MCF 10A (cell line): ENCODE measurements at regions of chr3 and their contacts with region 1.

Region 1: DNA sequence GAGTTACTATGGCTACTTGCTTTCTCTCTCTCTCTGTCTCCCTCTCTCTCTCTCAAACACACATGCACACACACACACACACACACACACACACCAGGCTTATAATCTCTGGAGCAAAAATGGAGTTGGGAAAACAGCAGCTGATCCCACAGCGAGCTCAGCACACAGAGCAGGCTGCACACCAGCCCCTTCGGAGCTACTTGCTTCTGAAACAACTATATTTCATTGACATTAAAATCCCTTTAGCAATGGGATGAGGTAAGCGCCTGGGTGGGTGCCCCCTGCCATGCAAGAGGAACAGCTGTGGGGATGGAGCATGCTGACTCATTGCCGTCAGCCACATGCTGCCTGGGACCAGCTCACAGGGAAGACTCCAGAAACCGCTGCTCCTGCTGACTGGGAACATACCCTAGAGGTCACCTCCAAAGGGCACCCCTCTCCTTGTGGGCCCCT is 45.7 kb downstream of the B3GNT5 start:
- DNase-seq: peak; percentile 87
- H3K4me3 Mint-ChIP-seq: no peak overlapping the region
- H3K27ac Mint-ChIP-seq: no peak overlapping the region
- H3K4me1 Mint-ChIP-seq: peaks cover 43% of the 10 kb centered on the region
- H3K27me3 Mint-ChIP-seq: no peaks in the 10 kb centered on the region
- CTCF ChIP-seq: no peak

Region 2: GRCh38 chr3:182165235-182165784 is 1133.4 kb before region 1 on chr3:
- CTCF ChIA-PET with region 1: no interaction called
- POLR2A ChIA-PET with region 1: no interaction called
- intact Hi-C with region 1: no loop called
- DNase-seq: peak; percentile 51
- H3K4me3 Mint-ChIP-seq: peak overlapping the region; percentile 10
- H3K27ac Mint-ChIP-seq: peak overlapping the region; percentile 44
- H3K4me1 Mint-ChIP-seq: peaks cover 6% of the 10 kb centered on the region
- H3K27me3 Mint-ChIP-seq: no peaks in the 10 kb centered on the region
- CTCF ChIP-seq: no peak

Region 3: DNA sequence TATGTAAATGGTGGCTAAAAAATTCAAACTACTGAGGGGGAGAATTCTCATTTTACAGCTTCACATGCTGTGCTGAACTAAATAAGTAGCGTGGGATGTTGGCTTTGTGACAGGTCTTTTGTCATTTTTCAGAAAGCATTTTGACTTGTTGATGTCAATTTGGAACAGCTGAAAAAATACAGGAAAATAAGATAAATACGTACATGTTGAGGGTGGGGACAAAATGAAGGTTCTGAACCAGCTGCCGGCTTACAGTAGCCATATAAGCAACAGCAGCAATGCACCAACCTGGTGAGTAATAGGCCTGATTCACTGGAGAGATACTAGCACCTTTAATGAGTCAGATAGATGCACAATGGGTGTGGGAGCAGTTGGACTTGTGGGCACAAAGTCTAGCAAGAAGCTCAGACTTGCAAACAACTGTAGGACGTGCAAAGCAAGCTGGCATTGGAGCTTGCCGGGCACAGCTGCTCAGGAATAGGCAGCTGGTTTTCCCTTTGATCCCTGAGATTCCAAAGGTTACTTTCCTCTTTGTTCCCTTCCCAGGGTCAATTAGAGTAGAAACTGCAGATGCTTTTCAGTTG is 32.8 kb before region 1 on chr3:
- CTCF ChIA-PET with region 1: interaction called, 6 read pairs
- POLR2A ChIA-PET with region 1: interaction called, 44 read pairs
- intact Hi-C with region 1: loop called (anchors 1 kb)
- DNase-seq: peak; percentile 96
- H3K4me3 Mint-ChIP-seq: no peak overlapping the region
- H3K27ac Mint-ChIP-seq: no peak overlapping the region
- H3K4me1 Mint-ChIP-seq: peaks cover 24% of the 10 kb centered on the region
- H3K27me3 Mint-ChIP-seq: no peaks in the 10 kb centered on the region
- CTCF ChIP-seq: no peak

Region 4: DNA sequence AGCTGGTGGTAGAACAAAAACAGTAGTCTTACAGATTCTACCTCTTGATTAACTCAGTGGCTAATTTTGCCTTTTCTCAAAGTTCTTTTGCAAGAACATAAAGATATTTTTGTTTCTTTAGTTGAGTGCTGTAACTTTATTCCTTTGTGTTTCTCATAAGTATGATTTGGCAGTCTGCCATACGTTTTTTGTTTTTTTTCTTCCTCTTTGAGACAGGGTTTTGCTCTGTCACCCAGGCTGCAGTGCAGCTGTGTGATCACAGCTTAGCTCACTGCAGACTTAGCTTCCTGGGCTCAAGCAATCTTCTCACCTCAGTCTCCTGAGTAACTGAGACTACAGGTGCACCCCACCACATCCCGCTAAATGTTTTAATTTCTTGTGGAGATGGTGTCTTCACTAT is 23.3 kb before region 1 on chr3:
- CTCF ChIA-PET with region 1: no interaction called
- POLR2A ChIA-PET with region 1: interaction called, 10 read pairs
- intact Hi-C with region 1: no loop called
- DNase-seq: peak; percentile 77
- H3K4me3 Mint-ChIP-seq: peak overlapping the region; percentile 19
- H3K27ac Mint-ChIP-seq: peak overlapping the region; percentile 17
- H3K4me1 Mint-ChIP-seq: peaks cover 41% of the 10 kb centered on the region
- H3K27me3 Mint-ChIP-seq: no peaks in the 10 kb centered on the region
- CTCF ChIP-seq: no peak

Region 5: DNA sequence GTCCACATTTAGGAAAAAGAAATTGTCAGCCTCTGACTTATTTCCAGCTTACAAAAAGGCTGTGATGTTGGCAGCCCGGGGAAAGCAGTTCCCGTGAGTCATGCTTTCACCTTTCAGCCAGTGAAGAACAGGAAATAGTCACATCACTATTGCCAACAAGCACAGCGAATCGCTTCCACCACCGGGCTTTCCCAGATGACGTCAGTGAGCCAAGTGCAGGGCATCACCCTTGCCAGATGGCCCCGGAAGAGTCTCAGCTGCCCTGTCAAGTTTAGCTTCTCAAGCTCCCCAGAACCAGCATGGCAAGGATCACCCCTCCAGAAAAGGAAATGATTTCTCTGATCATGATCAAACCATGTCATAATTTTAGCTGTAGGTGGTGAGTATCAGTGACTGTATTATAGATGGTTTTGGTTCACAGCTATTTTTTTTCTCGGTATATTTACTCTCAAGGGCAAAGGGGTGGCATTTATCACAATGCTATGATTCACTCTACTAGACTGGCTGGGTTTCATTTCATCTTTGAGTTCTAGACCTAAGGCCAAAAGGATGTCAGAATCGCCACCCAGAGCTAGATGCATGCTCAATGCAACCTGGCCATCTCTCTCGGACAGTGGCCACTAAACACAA is 12.8 kb before region 1 on chr3:
- CTCF ChIA-PET with region 1: no interaction called
- POLR2A ChIA-PET with region 1: interaction called, 26 read pairs
- intact Hi-C with region 1: no loop called
- DNase-seq: peak; percentile 99
- H3K4me3 Mint-ChIP-seq: peak overlapping the region; percentile 48
- H3K27ac Mint-ChIP-seq: peak overlapping the region; percentile 91
- H3K4me1 Mint-ChIP-seq: peaks cover 31% of the 10 kb centered on the region
- H3K27me3 Mint-ChIP-seq: no peaks in the 10 kb centered on the region
- CTCF ChIP-seq: no peak

Region 6: GRCh38 chr3:183328823-183329222 is 30.1 kb after region 1 on chr3:
- CTCF ChIA-PET with region 1: no interaction called
- POLR2A ChIA-PET with region 1: interaction called, 13 read pairs
- intact Hi-C with region 1: no loop called
- DNase-seq: peak; percentile 46
- H3K4me3 Mint-ChIP-seq: no peak overlapping the region
- H3K27ac Mint-ChIP-seq: peak overlapping the region; percentile 50
- H3K4me1 Mint-ChIP-seq: peaks cover 32% of the 10 kb centered on the region
- H3K27me3 Mint-ChIP-seq: no peaks in the 10 kb centered on the region
- CTCF ChIP-seq: no peak